ENCODE measurements at regions of chr1 and their contacts with region 1.

Region 1: DNA sequence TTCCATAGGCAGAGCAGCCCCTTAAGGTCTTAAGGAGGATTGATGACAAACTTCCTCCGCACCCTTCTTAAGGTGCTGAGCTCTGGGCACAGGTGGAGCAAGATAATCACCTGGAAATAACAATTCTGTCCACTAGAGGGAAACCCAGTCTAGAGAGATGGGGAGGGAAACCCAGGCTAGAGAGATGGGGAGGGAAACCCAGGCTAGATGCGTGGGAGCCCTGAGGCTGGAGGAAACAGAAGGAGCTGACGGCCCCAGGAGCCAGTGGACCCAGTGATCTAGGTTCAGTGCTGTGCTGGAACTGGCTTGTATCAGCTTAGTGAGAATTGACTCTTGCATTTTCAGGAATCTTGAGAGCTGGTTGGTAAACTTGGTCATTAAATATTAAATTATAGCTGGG is 17.8 kb upstream of the MYCL start:
- DNase-seq: peak; percentile 80
- H3K4me3 ChIP-seq: no peak overlapping the region
- H3K27ac ChIP-seq: no peak overlapping the region
- H3K4me1 ChIP-seq: no peaks in the 10 kb centered on the region
- CTCF ChIP-seq: peak; percentile 87

Region 2: GRCh38 chr1:38451541-38451993 is 1468.0 kb before region 1 on chr1:
- CTCF ChIA-PET with region 1: no interaction called
- POLR2A ChIA-PET with region 1: no interaction called
- intact Hi-C with region 1: no loop called
- DNase-seq: no peak
- H3K4me3 ChIP-seq: no peak overlapping the region
- H3K27ac ChIP-seq: no peak overlapping the region
- H3K4me1 ChIP-seq: no peaks in the 10 kb centered on the region
- CTCF ChIP-seq: no peak

Region 3: DNA sequence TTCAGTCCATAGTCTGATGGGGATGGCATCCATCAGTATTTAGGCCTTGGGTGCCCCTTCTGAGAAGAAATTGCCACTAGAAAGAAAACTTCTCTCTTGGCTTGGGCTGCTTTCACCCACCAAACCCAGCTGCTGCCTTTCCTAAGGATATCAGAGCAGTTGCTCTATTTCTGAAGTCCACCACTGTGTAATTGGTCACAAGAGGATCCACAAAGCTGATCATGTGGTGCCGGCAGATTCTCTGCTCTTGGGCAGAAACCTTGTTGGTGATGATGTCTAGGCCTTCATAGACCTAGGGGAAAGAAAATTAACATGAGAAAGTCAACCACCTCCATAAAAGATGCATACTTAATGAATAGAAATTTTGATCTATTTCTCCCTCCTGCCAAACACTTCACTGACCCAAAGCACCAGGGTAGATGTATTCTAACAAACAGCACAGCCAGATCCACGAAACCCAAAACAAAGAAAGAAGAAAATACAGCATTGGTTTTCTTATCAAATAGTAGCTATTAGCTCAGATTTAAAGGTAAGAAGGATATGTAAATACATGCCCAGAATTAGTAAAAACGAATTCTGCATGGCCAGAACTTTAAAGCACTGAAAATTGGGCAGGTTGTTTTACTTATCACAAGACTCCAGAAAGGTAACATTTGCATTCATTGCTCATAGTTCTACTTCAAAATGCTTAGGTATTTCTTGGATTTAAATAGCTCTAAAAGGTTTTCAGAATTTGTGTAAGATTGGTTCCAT is 62.2 kb before region 1 on chr1:
- CTCF ChIA-PET with region 1: no interaction called
- POLR2A ChIA-PET with region 1: no interaction called
- intact Hi-C with region 1: no loop called
- DNase-seq: no peak
- H3K4me3 ChIP-seq: no peak overlapping the region
- H3K27ac ChIP-seq: no peak overlapping the region
- H3K4me1 ChIP-seq: no peaks in the 10 kb centered on the region
- CTCF ChIP-seq: no peak

Region 4: DNA sequence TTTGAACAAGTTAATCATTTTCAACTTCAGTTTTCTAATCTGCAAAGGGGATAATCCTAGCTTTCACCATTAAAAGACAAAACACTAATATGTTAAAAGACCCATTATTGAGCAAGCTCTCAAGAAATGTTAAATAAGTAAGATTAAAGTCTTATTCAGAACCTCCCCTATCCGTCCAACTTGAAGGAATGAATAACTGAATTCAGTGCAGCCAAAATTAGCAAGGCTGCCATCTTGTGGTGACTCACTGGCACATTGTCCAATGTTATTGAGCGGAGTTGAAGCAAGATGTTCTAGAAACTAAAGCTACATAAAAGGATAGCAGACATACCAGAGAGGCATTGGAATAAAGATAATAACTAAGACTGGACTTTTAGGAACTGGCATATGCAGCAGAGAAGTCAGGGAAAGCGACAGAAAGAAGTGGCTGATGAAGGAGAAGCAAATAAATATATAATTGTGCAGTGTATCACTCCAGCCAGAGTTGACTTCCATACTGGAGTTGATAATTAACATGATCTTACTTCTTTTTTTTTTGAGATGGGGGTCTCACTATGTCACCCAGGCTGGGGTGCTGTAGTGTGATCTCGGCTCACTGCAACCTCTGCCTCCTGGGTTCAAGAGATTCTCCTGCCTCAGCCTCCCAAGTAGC is 112.8 kb after region 1 on chr1:
- CTCF ChIA-PET with region 1: interaction called, 14 read pairs
- POLR2A ChIA-PET with region 1: interaction called, 5 read pairs
- intact Hi-C with region 1: loop called (anchors 1 kb)
- DNase-seq: peak; percentile 72
- H3K4me3 ChIP-seq: no peak overlapping the region
- H3K27ac ChIP-seq: no peak overlapping the region
- H3K4me1 ChIP-seq: peaks cover 16% of the 10 kb centered on the region
- CTCF ChIP-seq: peak; percentile 97

Region 5: GRCh38 chr1:40059338-40059959 is 139.9 kb after region 1 on chr1:
- CTCF ChIA-PET with region 1: interaction called, 3 read pairs
- POLR2A ChIA-PET with region 1: interaction called, 13 read pairs
- intact Hi-C with region 1: no loop called
- DNase-seq: peak; percentile 78
- H3K4me3 ChIP-seq: peak overlapping the region; percentile 54
- H3K27ac ChIP-seq: peak overlapping the region; percentile 90
- H3K4me1 ChIP-seq: peaks cover 83% of the 10 kb centered on the region
- CTCF ChIP-seq: peak; percentile 75

Region 6: DNA sequence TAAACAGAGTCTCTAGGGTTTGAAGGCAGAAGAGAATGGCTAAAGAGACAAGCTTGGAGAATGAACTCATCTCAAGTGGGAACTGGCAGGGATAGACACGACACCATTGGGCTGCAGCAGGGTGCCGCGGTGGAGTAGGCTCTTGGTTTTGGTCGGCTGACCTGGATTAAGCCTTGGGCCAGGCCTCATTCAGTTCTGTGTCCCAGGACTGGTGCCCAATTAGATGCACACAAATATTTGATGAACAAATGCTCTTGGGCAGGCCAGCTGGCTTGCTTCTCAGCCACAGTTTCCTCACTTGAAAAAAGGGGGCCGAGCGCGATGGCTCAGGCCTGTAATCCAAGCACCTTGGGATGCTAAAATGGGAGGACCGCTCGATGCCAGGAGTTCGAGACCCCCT is 996.0 kb after region 1 on chr1:
- CTCF ChIA-PET with region 1: no interaction called
- POLR2A ChIA-PET with region 1: no interaction called
- intact Hi-C with region 1: no loop called
- DNase-seq: no peak
- H3K4me3 ChIP-seq: no peak overlapping the region
- H3K27ac ChIP-seq: no peak overlapping the region
- H3K4me1 ChIP-seq: no peaks in the 10 kb centered on the region
- CTCF ChIP-seq: no peak

Measured in OCI-LY7 (cell line).